ENCODE measurements at regions of chr5 and their contacts with region 1.

Region 1: DNA sequence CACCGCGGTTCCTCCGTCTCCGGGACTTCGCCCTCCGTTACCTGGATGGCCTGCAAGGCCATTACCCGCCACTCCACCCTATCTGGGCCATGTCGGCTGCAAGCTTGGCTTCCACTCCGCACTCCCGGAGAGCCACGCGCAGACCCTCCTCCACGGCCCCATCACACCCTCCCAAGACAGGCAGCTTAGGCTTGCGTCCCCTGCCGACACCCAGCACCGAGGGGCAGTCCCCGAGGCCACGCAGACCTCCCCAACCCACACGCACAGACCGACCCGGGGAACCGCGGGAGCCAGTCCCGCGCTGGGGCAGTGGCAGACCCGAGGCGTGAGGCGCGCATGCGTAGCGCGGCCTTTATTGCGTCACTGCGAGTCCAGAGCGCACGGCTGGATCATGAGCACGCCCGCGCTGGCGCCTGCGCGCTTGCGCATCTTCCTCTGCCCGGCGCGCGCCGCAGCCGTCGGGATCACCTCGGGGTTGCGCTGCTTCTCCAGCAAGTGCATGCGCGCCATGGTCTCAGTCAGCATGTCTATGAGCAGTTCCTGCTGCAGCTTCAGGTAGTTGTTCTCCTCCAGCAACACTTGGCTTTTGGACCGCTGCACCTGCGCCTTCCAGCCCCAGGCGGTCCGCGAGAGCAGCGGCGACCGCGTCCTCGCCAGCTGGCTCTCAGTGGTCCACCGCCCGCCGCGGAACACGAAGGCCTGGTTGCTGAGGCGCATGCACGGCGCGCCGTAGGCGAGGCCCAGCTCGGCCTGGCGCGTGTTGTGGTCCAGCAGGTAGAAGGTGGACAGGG is 2.4 kb downstream of the CBY3 start:
- DNase-seq: peak; percentile 49
- H3K4me3 ChIP-seq: peak overlapping the region; percentile 97
- CTCF ChIP-seq: no peak

Region 2: GRCh38 chr5:179668391-179668790 is 10.0 kb before region 1 on chr5:
- CTCF ChIA-PET with region 1: interaction called, 17 read pairs
- POLR2A ChIA-PET with region 1: interaction called, 3 read pairs
- DNase-seq: no peak
- H3K4me3 ChIP-seq: no peak overlapping the region
- CTCF ChIP-seq: peak; percentile 78

Region 3: DNA sequence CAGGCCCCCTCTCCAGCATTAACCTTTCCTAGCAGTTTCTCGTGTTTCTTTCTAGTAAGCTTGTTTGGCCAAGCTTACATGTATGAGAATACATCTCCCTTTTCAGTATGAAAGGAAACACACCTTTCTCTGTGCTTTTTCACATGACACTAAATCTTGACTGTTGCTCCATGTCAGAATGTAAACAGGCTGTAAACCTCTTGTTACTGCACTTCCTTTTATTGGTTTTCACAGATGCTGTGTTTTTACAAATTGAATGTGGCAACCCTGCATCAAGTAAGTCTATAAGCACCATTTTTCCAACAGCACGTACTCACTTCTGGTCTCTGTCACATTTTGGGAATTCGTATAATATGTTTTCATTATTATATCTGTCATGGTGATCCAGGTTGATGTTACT is 18.2 kb after region 1 on chr5:
- CTCF ChIA-PET with region 1: interaction called, 16 read pairs
- POLR2A ChIA-PET with region 1: no interaction called
- DNase-seq: no peak
- H3K4me3 ChIP-seq: no peak overlapping the region
- CTCF ChIP-seq: no peak

Region 4: GRCh38 chr5:179821581-179822432 is 143.4 kb after region 1 on chr5:
- CTCF ChIA-PET with region 1: no interaction called
- POLR2A ChIA-PET with region 1: no interaction called
- DNase-seq: peak; percentile 60
- H3K4me3 ChIP-seq: peak overlapping the region; percentile 86
- CTCF ChIP-seq: no peak